Activated naive CD4-positive, alpha-beta T cell treated with anti-CD3 and anti-CD28 coated beads for 36 hours (primary cell): ENCODE measurements at regions of chr3 and their contacts with region 1.

Region 1: GRCh38 chr3:129439817-129440617 is at the starts of genes IFT122 and MBD4:
- DNase-seq: peak; percentile 99
- H3K4me3 Mint-ChIP-seq: peak within 1 kb of the TSS; percentile 87
- H3K27ac Mint-ChIP-seq: peak within 1 kb of the TSS; percentile 89
- H3K4me1 Mint-ChIP-seq: peaks cover 53% of the 10 kb centered on the region
- H3K27me3 Mint-ChIP-seq: no peaks in the 10 kb centered on the region
- total RNA-seq, gene IFT122: 27.8 to 32.4 TPM
- total RNA-seq, gene MBD4: 50.9 to 51.0 TPM

Region 2: GRCh38 chr3:128879125-128879969 is 560.7 kb before region 1 on chr3 and contains the start of gene ACAD9:
- CTCF ChIA-PET with region 1: no interaction called
- intact Hi-C with region 1: loop called (anchors 1 kb)
- DNase-seq: peak; percentile 96
- H3K4me3 Mint-ChIP-seq: peak within 1 kb of the TSS; percentile 84
- H3K27ac Mint-ChIP-seq: peak within 1 kb of the TSS; percentile 90
- H3K4me1 Mint-ChIP-seq: peaks cover 67% of the 10 kb centered on the region
- H3K27me3 Mint-ChIP-seq: no peaks in the 10 kb centered on the region
- total RNA-seq, gene ACAD9: 37.0 to 40.6 TPM

Region 3: GRCh38 chr3:128973988-128974564 is 465.9 kb before region 1 on chr3:
- CTCF ChIA-PET with region 1: no interaction called
- intact Hi-C with region 1: no loop called
- DNase-seq: no peak
- H3K4me3 Mint-ChIP-seq: no peak overlapping the region
- H3K27ac Mint-ChIP-seq: no peak overlapping the region
- H3K4me1 Mint-ChIP-seq: no peaks in the 10 kb centered on the region
- H3K27me3 Mint-ChIP-seq: no peaks in the 10 kb centered on the region

Region 4: GRCh38 chr3:129278439-129278970 is 161.5 kb before region 1 on chr3 and contains the start of gene HMCES:
- CTCF ChIA-PET with region 1: no interaction called
- intact Hi-C with region 1: loop called (anchors 1 kb)
- DNase-seq: peak; percentile 96
- H3K4me3 Mint-ChIP-seq: peak within 1 kb of the TSS; percentile 87
- H3K27ac Mint-ChIP-seq: peak within 1 kb of the TSS; percentile 90
- H3K4me1 Mint-ChIP-seq: peaks cover 48% of the 10 kb centered on the region
- H3K27me3 Mint-ChIP-seq: no peaks in the 10 kb centered on the region
- total RNA-seq, gene HMCES: 35.0 to 35.8 TPM

Region 5: DNA sequence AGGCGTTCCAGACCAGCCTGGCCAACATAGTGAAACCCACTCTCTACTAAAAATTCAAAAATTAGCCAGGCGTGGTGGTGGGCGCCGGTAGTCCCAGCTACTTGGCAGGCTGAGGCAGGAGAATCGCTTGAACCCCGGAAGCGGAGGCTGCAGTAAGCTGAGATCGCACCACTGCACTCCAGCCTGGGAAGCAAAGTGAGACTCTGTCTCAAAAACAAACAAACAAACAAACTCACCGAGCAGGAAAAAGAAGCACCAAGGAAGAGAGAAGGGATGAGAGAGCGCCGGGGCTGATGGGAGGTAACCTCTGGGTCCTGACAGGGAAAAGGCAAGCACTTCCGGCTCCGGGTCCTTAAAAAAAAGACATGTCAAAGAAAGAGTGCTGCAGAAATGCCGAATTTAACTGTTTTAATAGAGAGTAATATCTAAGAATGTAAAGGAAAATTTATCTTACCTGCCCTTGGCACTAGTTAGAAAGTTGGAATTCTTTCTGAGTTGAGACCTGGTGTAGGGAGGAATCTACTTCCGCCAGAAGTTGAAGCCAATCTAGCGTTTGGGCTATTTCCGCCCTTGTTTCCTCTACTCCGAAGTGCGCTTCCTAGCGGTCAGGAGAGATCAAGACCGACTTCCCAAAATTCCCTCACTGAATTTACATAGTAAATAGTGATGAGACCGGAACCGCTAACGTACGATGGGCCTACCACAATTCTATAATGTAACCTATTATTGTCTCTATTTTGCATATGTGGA is 40.7 kb before region 1 on chr3:
- CTCF ChIA-PET with region 1: interaction called, 9 read pairs
- intact Hi-C with region 1: loop called (anchors 1 kb)
- DNase-seq: peak; percentile 87
- H3K4me3 Mint-ChIP-seq: peak overlapping the region; percentile 100
- H3K27ac Mint-ChIP-seq: peak overlapping the region; percentile 99
- H3K4me1 Mint-ChIP-seq: peaks cover 31% of the 10 kb centered on the region
- H3K27me3 Mint-ChIP-seq: no peaks in the 10 kb centered on the region

Region 6: DNA sequence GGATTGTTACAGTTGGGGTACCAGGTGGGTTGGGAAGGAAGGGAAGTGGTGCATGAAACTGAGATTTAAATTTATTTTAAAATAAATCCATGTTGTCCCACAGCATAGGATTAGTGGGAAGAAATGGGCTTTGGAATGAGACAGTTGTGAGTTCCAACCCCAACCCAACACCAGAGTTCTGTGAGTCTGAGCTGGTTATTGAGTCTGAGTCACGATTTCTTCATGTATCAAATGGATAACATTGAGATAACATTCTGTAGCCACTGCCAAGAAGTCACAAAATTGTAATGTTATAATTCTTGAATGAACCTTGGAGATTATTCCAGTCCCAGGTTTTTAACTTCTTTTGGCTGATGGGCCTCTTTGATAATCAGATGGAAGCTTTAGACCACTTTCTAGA is 13.7 kb after region 1 on chr3:
- CTCF ChIA-PET with region 1: no interaction called
- intact Hi-C with region 1: no loop called
- DNase-seq: no peak
- H3K4me3 Mint-ChIP-seq: no peak overlapping the region
- H3K27ac Mint-ChIP-seq: no peak overlapping the region
- H3K4me1 Mint-ChIP-seq: peaks cover 7% of the 10 kb centered on the region
- H3K27me3 Mint-ChIP-seq: no peaks in the 10 kb centered on the region

Region 7: DNA sequence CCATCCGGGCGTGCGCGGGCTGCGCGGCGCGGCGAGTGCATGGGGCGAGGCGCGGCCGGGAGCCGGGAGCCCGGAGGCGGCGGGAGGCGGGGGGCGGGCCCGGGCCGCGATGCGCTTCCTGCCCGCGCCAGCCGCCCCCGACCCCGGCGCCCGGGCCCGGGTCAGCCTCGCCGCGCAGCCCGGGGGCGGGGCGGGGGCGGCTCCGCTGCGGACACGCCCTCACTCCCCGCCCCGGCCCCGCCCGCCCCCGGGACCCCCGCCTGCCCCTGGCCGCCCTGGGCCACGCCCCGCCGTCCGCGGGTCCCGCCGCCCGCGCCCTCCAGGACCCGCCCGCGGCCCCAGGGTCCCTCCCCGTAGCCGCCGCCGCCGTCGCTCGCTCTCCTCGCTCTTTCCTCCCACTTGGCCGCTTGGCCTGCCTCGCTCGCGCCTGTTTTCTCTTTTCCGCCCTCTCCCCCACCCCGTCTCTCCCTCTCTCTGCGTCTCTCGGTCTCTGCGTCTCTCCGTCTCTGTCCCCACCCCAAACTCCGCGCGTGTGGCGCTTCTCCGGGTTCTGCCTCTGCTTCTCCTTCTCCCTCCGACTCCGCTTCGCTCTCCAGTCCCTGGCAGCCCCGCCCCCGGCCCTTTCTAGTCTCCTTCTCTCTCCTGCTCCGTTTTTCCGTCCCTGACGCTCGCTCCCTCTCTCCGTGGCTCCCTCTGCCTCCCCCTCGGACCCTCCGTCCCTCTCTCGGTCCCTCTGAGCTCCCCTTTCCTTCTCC is 166.8 kb after region 1 on chr3 and contains the start of gene PLXND1:
- CTCF ChIA-PET with region 1: no interaction called
- intact Hi-C with region 1: loop called (anchors 5 kb)
- DNase-seq: peak; percentile 27
- H3K4me3 Mint-ChIP-seq: peak within 1 kb of the TSS; percentile 77
- H3K27ac Mint-ChIP-seq: peak within 1 kb of the TSS; percentile 6
- H3K4me1 Mint-ChIP-seq: peaks cover 7% of the 10 kb centered on the region
- H3K27me3 Mint-ChIP-seq: peaks cover 19% of the 10 kb centered on the region
- total RNA-seq, gene PLXND1: 5.1 to 6.2 TPM

Region 8: GRCh38 chr3:129893581-129894070 is 453.6 kb after region 1 on chr3 and contains the start of gene TMCC1:
- CTCF ChIA-PET with region 1: no interaction called
- intact Hi-C with region 1: loop called (anchors 1 kb)
- DNase-seq: peak; percentile 87
- H3K4me3 Mint-ChIP-seq: peak within 1 kb of the TSS; percentile 92
- H3K27ac Mint-ChIP-seq: peak within 1 kb of the TSS; percentile 70
- H3K4me1 Mint-ChIP-seq: peaks cover 38% of the 10 kb centered on the region
- H3K27me3 Mint-ChIP-seq: no peaks in the 10 kb centered on the region
- total RNA-seq, gene TMCC1: 13.6 to 14.3 TPM